ENCODE measurements at regions of chr9 and their contacts with region 1.

Region 1: DNA sequence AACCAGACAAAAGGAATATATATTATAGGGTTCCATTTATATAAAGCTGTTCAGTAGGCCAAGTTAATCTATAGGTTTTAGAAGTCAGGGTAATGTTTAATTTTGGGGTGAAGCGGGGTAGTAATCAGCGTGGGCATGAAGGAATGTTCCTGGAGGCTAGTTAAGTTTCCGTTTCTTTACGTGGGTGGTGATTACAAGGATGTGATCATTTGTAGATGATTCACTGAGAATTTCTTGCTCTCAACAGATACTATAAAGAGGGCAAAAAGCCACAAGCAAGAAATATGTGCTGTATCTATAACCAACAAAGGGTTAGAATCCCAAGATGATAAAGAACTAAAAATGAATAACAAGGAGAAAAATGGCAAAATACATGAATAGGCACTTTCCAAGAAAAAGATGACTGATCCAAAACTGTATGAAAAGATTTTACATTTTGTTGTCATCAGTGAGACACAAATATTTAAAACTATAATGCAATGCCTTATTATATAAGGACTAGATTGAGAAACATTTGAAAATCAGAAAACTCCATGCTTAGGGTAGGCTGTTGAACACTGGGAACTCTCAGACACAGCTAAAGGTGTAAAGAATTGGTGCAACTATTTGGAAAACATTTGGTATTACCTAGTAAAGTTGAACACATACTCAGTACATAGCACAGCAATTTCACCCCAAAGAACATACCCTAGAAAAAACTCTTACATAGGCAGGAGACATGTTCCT is 224.3 kb upstream of the S1PR3 start:
- DNase-seq: peak; percentile 87
- H3K4me3 ChIP-seq: peak overlapping the region; percentile 37; the same call in 1 of the 2 replicates
- H3K27ac ChIP-seq: peak overlapping the region; percentile 46
- H3K4me1 ChIP-seq: peaks cover 31% of the 10 kb centered on the region
- H3K27me3 ChIP-seq: no peaks in the 10 kb centered on the region

Region 2: DNA sequence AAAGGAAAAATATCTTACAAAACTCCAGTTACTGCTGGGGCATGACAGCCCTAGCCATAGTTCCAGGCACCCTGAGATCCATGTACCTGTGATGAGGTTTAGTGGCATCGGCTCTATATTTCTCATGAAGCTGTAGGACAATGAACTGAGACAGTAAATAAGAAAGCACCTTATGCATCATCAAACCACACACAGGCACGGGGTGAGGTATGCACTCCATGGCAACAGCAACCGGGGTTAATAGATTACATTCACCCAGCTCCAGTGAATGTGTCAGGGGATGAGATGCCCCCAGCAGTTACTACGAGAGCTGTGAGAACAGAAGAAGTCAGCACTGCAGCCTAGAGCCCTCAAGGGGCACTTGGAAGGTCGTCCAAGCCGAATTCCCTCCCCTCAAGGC is 62.3 kb after region 1 on chr9:
- in situ Hi-C with region 1: loop called (anchors 10 kb)
- DNase-seq: no peak
- H3K4me3 ChIP-seq: no peak overlapping the region
- H3K27ac ChIP-seq: no peak overlapping the region
- H3K4me1 ChIP-seq: peaks cover 12% of the 10 kb centered on the region
- H3K27me3 ChIP-seq: no peaks in the 10 kb centered on the region

Measured in GM23248 (cell line).